ENCODE measurements at regions of chr11 and their contacts with region 1.

Region 1: GRCh38 chr11:66408488-66409214 is 12.2 kb upstream of the NPAS4 start:
- ATAC-seq: peak; percentile 92 to 98 (median 94)
- H3K4me3 ChIP-seq: peak overlapping the region; percentile 38 to 48 (median 45)
- H3K27ac ChIP-seq: peak overlapping the region in 1 of 2 donors; percentile 42
- H3K4me1 ChIP-seq: peaks cover 3% of the 10 kb centered on the region in 2 donors

Region 2: GRCh38 chr11:66498506-66498905 is 89.9 kb after region 1 on chr11:
- in situ Hi-C with region 1: no loop called
- ATAC-seq: no peak
- H3K4me3 ChIP-seq: no peak overlapping the region
- H3K27ac ChIP-seq: no peak overlapping the region
- H3K4me1 ChIP-seq: no peaks in the 10 kb centered on the region

Region 3: DNA sequence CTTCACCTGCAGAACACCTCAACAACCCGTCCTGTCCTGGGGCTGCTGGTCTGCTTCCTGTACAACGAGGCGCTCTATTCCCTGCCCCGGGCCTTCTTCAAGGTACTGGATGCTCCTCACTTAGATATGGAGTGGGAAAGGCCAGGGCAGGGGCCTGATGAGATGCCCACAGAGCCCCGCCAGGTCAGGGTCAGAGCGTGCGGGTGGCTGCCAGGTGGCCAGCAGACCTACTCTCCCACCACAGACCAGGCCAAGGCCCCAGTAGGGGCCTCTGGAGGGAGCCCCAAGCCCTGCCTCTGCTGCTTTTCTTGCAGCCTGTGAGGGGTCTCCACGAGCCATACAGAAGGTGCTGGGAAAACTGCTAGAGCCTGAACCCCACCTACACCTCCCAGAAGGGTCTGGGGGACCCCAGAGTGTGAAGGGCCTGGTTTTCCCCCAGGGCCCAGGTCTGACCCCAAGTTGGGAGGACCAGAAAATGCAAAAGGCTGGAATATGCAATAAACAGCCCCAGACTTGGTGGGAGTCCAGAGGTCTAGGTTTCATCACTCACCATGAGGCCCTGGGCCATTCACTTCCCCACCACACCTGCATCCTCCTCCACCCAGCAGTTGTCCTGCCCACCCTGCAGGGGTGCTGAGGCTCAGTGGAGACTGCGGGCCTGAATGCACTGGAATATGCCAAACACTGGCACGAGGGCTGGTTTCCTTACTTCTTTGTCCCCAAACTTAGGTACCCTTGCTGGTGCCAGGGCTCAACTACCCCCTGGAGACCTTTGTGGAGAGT is 122.5 kb after region 1 on chr11:
- in situ Hi-C with region 1: no loop called
- ATAC-seq: peak in 5 of 8 experiments; percentile 9 to 58 (median 32)
- H3K4me3 ChIP-seq: no peak overlapping the region
- H3K27ac ChIP-seq: no peak overlapping the region
- H3K4me1 ChIP-seq: no peaks in the 10 kb centered on the region

Region 4: GRCh38 chr11:66677599-66678375 is 269.1 kb after region 1 on chr11 and contains the start of gene RBM4B:
- in situ Hi-C with region 1: loop called in 3 of 9 experiments (anchors 25 kb)
- ATAC-seq: peak; percentile 88 to 96 (median 92)
- H3K4me3 ChIP-seq: peak within 1 kb of the TSS; percentile 59 to 84 (median 69)
- H3K27ac ChIP-seq: peak within 1 kb of the TSS; percentile 97 to 99
- H3K4me1 ChIP-seq: peaks cover 31 to 37% of the 10 kb centered on the region in 2 donors
- total RNA-seq, gene RBM4B: 14.9 to 59.5 (median 47.7) TPM

Region 5: GRCh38 chr11:66842896-66843775 is 434.5 kb after region 1 on chr11 and contains the start of gene RCE1:
- in situ Hi-C with region 1: loop called in 1 of 9 experiments (anchors 25 kb)
- ATAC-seq: peak; percentile 85 to 93 (median 88)
- H3K4me3 ChIP-seq: peak within 1 kb of the TSS; percentile 91 to 98 (median 93)
- H3K27ac ChIP-seq: peak within 1 kb of the TSS; percentile 81 to 94
- H3K4me1 ChIP-seq: peaks cover 15 to 16% of the 10 kb centered on the region in 2 donors
- total RNA-seq, gene RCE1: 11.4 to 21.6 (median 15.4) TPM

Region 6: DNA sequence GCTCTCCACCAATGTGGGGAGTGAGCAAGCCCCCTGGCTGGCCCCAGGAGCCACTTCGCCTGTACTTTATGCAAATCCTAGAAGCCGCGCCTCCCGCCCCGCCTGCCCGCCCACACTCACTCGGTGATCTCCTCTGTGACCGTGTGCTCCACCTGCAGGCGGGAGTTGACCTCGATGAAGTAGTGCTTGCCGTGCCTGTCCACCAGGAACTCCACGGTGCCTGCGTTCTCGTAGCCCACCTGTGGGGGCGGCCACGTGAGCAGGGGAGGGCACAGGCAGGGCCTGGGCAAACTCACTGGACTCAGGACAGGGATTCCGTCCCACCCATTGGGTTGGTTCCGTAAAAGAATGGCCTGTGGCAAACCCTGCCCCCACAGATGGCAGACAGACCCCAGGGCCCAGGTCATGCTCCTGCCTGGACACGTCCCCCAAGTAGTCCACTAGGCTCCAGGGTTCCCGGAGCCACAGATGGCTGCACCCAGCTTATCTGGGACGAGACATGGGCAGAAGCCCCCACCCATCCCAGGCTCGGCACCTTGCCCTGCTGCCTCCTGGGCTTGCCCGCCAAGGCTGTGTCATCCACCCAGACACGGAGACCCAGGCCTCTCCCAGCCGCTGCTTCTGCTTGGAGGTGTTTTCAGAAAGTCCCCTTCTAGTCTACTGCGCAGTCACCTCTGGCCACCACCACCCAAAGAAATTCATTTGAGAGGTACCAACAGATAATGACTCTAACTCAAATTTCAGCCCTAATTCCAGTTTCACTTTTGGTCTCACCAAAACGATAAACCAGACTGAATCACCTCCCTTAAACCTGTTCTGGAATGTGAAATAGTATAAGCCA is 460.3 kb after region 1 on chr11:
- in situ Hi-C with region 1: no loop called
- ATAC-seq: peak in 2 of 8 experiments; percentile 22 to 64
- H3K4me3 ChIP-seq: no peak overlapping the region
- H3K27ac ChIP-seq: no peak overlapping the region
- H3K4me1 ChIP-seq: no peaks in the 10 kb centered on the region

Measured in motor neuron (in vitro differentiated cells).